ENCODE measurements at regions of chr20 and their contacts with region 1.

Region 1: GRCh38 chr20:44187051-44187762 is at the start of gene JPH2:
- DNase-seq: peak; percentile 92
- H3K4me3 Mint-ChIP-seq: peak within 1 kb of the TSS; percentile 67
- H3K27ac Mint-ChIP-seq: peak within 1 kb of the TSS; percentile 79
- H3K4me1 Mint-ChIP-seq: peaks cover 63% of the 10 kb centered on the region
- H3K27me3 Mint-ChIP-seq: no peaks in the 10 kb centered on the region
- CTCF ChIP-seq: no peak
- total RNA-seq, gene JPH2: 11.1 and 14.7 TPM in 2 replicates

Region 2: GRCh38 chr20:44092551-44093248 is 94.5 kb before region 1 on chr20:
- CTCF ChIA-PET with region 1: interaction called, 20 read pairs
- POLR2A ChIA-PET with region 1: interaction called, 7 read pairs
- intact Hi-C with region 1: no loop called
- DNase-seq: peak; percentile 61
- H3K4me3 Mint-ChIP-seq: no peak overlapping the region
- H3K27ac Mint-ChIP-seq: no peak overlapping the region
- H3K4me1 Mint-ChIP-seq: peaks cover 16% of the 10 kb centered on the region
- H3K27me3 Mint-ChIP-seq: no peaks in the 10 kb centered on the region
- CTCF ChIP-seq: peak; percentile 52

Region 3: GRCh38 chr20:44123251-44123650 is 64.0 kb before region 1 on chr20:
- CTCF ChIA-PET with region 1: interaction called, 638 read pairs
- POLR2A ChIA-PET with region 1: interaction called, 117 read pairs
- intact Hi-C with region 1: no loop called
- DNase-seq: no peak
- H3K4me3 Mint-ChIP-seq: no peak overlapping the region
- H3K27ac Mint-ChIP-seq: no peak overlapping the region
- H3K4me1 Mint-ChIP-seq: no peaks in the 10 kb centered on the region
- H3K27me3 Mint-ChIP-seq: no peaks in the 10 kb centered on the region
- CTCF ChIP-seq: no peak

Region 4: DNA sequence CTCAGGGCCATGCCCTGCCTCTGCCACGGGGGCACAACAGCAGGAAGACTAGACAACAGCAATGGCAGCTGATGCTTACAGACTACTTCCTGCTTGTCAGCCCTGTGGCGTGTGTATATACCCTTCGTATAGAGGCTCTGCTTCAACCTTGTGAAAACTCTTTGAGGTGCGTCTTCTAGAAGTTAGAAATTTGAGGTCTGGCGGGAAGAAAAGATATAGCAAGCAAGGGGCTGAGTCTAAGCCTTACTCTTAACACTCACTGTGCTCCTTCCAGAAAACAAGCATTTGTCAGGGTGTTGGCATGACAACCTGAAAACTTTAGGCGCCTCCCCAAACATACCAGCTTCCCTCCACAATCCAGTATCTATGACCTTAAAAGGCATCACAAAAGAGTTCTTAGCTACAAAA is 33.6 kb before region 1 on chr20:
- CTCF ChIA-PET with region 1: interaction called, 51 read pairs
- POLR2A ChIA-PET with region 1: interaction called, 11 read pairs
- intact Hi-C with region 1: loop called (anchors 2 kb)
- DNase-seq: no peak
- H3K4me3 Mint-ChIP-seq: no peak overlapping the region
- H3K27ac Mint-ChIP-seq: no peak overlapping the region
- H3K4me1 Mint-ChIP-seq: peaks cover 15% of the 10 kb centered on the region
- H3K27me3 Mint-ChIP-seq: no peaks in the 10 kb centered on the region
- CTCF ChIP-seq: no peak

Region 5: GRCh38 chr20:44210422-44211176 is 23.4 kb after region 1 on chr20 and contains the start of gene OSER1:
- CTCF ChIA-PET with region 1: interaction called, 32 read pairs
- POLR2A ChIA-PET with region 1: interaction called, 62 read pairs
- intact Hi-C with region 1: no loop called
- DNase-seq: peak; percentile 99
- H3K4me3 Mint-ChIP-seq: peak within 1 kb of the TSS; percentile 100
- H3K27ac Mint-ChIP-seq: peak within 1 kb of the TSS; percentile 100
- H3K4me1 Mint-ChIP-seq: peaks cover 39% of the 10 kb centered on the region
- H3K27me3 Mint-ChIP-seq: no peaks in the 10 kb centered on the region
- CTCF ChIP-seq: no peak
- total RNA-seq, gene OSER1: 45.4 and 50.8 TPM in 2 replicates

Measured in MCF 10A (cell line).